GM12878 (cell line): ENCODE measurements at regions of chr15 and their contacts with region 1.

Region 1: DNA sequence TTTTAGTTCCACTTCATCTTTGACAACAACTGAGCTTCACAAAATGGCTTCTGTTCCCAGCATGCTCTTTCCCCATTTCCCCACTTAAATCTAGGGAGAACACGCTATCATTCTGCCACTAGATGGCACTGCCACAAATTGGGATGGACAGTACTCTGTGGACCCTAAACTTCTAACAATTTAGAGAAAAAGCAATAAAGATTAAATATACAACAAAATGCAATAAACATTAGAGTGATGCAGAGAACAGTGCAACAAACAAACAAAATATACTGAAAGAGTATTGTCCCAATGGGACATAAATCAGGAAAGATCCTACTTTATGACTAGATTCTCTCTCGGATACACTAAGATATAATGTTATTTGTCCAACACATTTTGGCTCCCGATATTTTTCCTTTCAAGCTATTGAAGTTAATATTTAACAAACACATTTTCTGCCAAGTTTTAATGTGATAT is 169.7 kb upstream of the TMCO5A start:
- DNase-seq: no peak
- ATAC-seq: peak; percentile 80
- H3K4me3 ChIP-seq: no peak overlapping the region
- H3K27ac ChIP-seq: no peak overlapping the region
- H3K4me1 ChIP-seq: no peaks in the 10 kb centered on the region
- H3K27me3 ChIP-seq: no peaks in the 10 kb centered on the region
- CTCF ChIP-seq: peak; percentile 21 to 45 (median 36); a peak in 4 of 6 replicates
- EP300 ChIP-seq: no peak
- POLR2A ChIP-seq: no peak
- RAD21 ChIP-seq: no peak

Region 2: GRCh38 chr15:37594417-37594816 is 170.3 kb before region 1 on chr15:
- CTCF ChIA-PET with region 1: no interaction called
- POLR2A ChIA-PET with region 1: no interaction called
- RAD21 ChIA-PET with region 1: no interaction called
- SMC1A ChIA-PET with region 1: no interaction called
- in situ Hi-C with region 1: no loop called
- intact Hi-C with region 1: loop called (anchors 10 kb)
- DNase-seq: no peak
- ATAC-seq: no peak
- H3K4me3 ChIP-seq: no peak overlapping the region
- H3K27ac ChIP-seq: no peak overlapping the region
- H3K4me1 ChIP-seq: no peaks in the 10 kb centered on the region
- H3K27me3 ChIP-seq: no peaks in the 10 kb centered on the region
- CTCF ChIP-seq: no peak
- EP300 ChIP-seq: no peak
- POLR2A ChIP-seq: no peak
- RAD21 ChIP-seq: no peak

Region 3: DNA sequence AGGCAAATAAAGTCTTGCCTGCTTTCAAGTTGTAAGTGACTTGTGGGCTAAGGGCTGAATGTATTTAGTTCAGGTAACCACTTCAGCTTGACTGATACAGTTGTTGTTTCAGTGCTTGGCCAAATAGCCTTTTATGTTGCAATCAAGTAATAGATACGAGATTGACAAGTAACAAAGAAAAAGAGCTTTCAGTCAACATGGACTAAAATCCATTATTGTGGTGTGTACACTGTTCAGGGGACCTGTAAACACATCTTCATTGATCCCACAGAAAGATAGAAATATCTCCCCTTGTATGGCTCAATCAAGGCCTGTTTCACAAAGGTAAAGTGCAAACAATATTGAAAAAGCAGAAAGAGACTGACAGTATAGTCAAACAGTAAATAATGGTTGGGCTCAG is 55.1 kb before region 1 on chr15:
- CTCF ChIA-PET with region 1: interaction called, 3 read pairs
- POLR2A ChIA-PET with region 1: no interaction called
- RAD21 ChIA-PET with region 1: no interaction called
- SMC1A ChIA-PET with region 1: no interaction called
- in situ Hi-C with region 1: no loop called
- intact Hi-C with region 1: loop called (anchors 10 kb)
- DNase-seq: no peak
- ATAC-seq: no peak
- H3K4me3 ChIP-seq: no peak overlapping the region
- H3K27ac ChIP-seq: no peak overlapping the region
- H3K4me1 ChIP-seq: no peaks in the 10 kb centered on the region
- H3K27me3 ChIP-seq: no peaks in the 10 kb centered on the region
- CTCF ChIP-seq: no peak
- EP300 ChIP-seq: no peak
- POLR2A ChIP-seq: no peak
- RAD21 ChIP-seq: no peak

Region 4: DNA sequence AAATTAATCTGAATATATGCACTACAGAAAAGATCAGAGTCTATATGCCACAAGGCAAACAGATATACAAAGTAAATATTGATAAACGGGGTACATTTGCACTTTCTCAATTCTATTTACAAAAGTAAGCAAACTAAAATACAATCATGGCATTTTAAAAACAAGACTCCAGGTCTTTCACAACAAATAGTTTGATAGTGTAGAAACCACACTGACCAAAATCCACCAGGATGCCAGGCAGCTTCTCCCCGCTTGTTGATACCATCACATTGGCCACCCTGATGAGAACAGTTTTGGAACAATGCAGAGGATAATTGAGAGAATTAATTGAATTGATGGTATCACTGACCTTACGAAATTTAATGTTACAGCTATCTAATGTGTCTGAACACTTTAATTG is 20.9 kb before region 1 on chr15:
- CTCF ChIA-PET with region 1: no interaction called
- POLR2A ChIA-PET with region 1: no interaction called
- RAD21 ChIA-PET with region 1: no interaction called
- SMC1A ChIA-PET with region 1: no interaction called
- in situ Hi-C with region 1: no loop called
- intact Hi-C with region 1: no loop called
- DNase-seq: no peak
- ATAC-seq: no peak
- H3K4me3 ChIP-seq: no peak overlapping the region
- H3K27ac ChIP-seq: no peak overlapping the region
- H3K4me1 ChIP-seq: no peaks in the 10 kb centered on the region
- H3K27me3 ChIP-seq: no peaks in the 10 kb centered on the region
- CTCF ChIP-seq: no peak
- EP300 ChIP-seq: no peak
- POLR2A ChIP-seq: no peak
- RAD21 ChIP-seq: no peak

Region 5: DNA sequence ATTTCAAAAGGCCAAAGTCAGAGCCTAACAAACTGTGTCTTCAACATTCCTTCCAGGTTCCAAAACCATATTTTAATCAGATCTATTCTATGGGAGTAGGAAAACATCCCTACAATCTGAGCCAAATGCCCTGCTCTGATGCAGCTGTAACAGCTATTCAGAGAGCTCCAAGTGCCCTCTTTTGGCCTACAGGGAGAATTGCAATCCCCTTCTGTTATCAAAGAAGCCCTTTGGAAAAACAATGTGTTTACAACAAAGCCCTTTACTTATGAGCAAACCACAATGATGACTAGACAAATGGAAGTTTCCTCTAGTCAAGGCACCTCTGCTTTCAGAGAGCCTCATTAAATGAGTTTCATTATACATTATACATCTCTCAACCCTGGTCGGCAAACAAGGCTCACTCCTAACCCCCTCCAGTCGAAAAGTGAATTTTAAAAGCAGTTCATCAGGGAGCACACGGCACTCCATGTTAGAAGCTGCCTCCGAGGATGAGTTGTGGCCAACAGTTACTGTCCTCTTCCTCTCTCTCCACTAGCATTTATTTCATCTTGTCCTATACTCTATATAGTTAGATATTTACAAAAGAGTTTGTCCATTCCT is 127.1 kb after region 1 on chr15:
- CTCF ChIA-PET with region 1: interaction called, 14 read pairs
- POLR2A ChIA-PET with region 1: no interaction called
- RAD21 ChIA-PET with region 1: no interaction called
- SMC1A ChIA-PET with region 1: no interaction called
- in situ Hi-C with region 1: no loop called
- intact Hi-C with region 1: no loop called
- DNase-seq: no peak
- ATAC-seq: peak; percentile 75
- H3K4me3 ChIP-seq: no peak overlapping the region
- H3K27ac ChIP-seq: no peak overlapping the region
- H3K4me1 ChIP-seq: no peaks in the 10 kb centered on the region
- H3K27me3 ChIP-seq: no peaks in the 10 kb centered on the region
- CTCF ChIP-seq: peak; percentile 72 to 76 (median 75)
- EP300 ChIP-seq: no peak
- POLR2A ChIP-seq: no peak
- RAD21 ChIP-seq: peak; percentile 73

Region 6: GRCh38 chr15:37931868-37932267 is 167.1 kb after region 1 on chr15:
- CTCF ChIA-PET with region 1: no interaction called
- POLR2A ChIA-PET with region 1: no interaction called
- RAD21 ChIA-PET with region 1: no interaction called
- SMC1A ChIA-PET with region 1: no interaction called
- in situ Hi-C with region 1: no loop called
- intact Hi-C with region 1: no loop called
- DNase-seq: no peak
- ATAC-seq: no peak
- H3K4me3 ChIP-seq: no peak overlapping the region
- H3K27ac ChIP-seq: no peak overlapping the region
- H3K4me1 ChIP-seq: no peaks in the 10 kb centered on the region
- H3K27me3 ChIP-seq: no peaks in the 10 kb centered on the region
- CTCF ChIP-seq: no peak
- EP300 ChIP-seq: no peak
- POLR2A ChIP-seq: no peak
- RAD21 ChIP-seq: no peak